Activated CD4-positive, alpha-beta T cell treated with anti-CD3 and anti-CD28 coated beads, Interleukin-2, amount 10 ng/mL, durations not matched to agents 24 days and 14 days (primary cell): ENCODE measurements at regions of chr3 and their contacts with region 1.

Region 1: DNA sequence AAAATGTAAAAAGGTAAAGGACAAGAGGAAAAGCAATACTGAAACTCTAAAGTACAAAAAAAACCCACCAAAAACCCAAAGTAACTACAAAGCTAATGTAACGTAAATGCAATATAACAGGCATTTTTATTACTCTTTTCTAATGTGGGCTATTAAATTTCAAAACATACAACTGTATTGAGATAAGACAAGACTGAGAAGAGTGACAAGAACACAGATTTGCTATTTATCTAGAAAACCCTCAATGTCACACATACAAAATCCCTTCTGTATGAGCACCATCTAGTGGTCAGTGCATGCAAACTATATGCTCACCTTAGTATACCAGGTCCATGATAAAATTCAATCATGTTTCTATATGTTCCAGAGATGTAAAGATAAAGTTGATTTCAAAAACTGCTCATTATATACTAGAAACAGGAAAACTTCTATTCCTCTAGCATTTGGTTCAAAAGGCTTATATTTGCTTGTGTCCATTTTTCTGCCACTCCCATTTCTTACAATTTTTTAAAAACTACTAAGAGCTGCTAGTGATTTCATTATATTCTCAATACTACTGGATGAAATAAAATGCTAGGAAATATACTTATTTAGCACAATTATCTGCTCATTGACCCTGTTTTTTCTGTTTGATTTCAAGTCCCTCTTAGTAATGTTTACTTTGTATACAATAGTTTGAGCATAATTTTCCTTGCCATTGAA is 111.4 kb downstream of the DLG1 start:
- DNase-seq: peak; percentile 74
- H3K4me3 Mint-ChIP-seq: no peak overlapping the region
- H3K27ac Mint-ChIP-seq: no peak overlapping the region
- H3K4me1 Mint-ChIP-seq: peaks cover 8% of the 10 kb centered on the region
- H3K27me3 Mint-ChIP-seq: no peaks in the 10 kb centered on the region

Region 2: GRCh38 chr3:196339493-196340254 is 847.4 kb before region 1 on chr3:
- intact Hi-C with region 1: no loop called
- DNase-seq: no peak
- H3K4me3 Mint-ChIP-seq: no peak overlapping the region
- H3K27ac Mint-ChIP-seq: no peak overlapping the region
- H3K4me1 Mint-ChIP-seq: peaks cover 2% of the 10 kb centered on the region
- H3K27me3 Mint-ChIP-seq: peaks cover 2% of the 10 kb centered on the region

Region 3: GRCh38 chr3:196837819-196838420 is 349.1 kb before region 1 on chr3:
- intact Hi-C with region 1: loop called (anchors 5 kb)
- DNase-seq: peak; percentile 91
- H3K4me3 Mint-ChIP-seq: no peak overlapping the region
- H3K27ac Mint-ChIP-seq: no peak overlapping the region
- H3K4me1 Mint-ChIP-seq: peaks cover 3% of the 10 kb centered on the region
- H3K27me3 Mint-ChIP-seq: no peaks in the 10 kb centered on the region

Region 4: GRCh38 chr3:196942226-196942914 is 244.7 kb before region 1 on chr3 and contains the start of gene NCBP2:
- intact Hi-C with region 1: loop called (anchors 2 kb)
- DNase-seq: peak; percentile 100
- H3K4me3 Mint-ChIP-seq: peak within 1 kb of the TSS; percentile 89
- H3K27ac Mint-ChIP-seq: peak within 1 kb of the TSS; percentile 95
- H3K4me1 Mint-ChIP-seq: peaks cover 41% of the 10 kb centered on the region
- H3K27me3 Mint-ChIP-seq: peaks cover 2% of the 10 kb centered on the region
- total RNA-seq, gene NCBP2: 101 and 105 TPM in 2 replicates

Region 5: DNA sequence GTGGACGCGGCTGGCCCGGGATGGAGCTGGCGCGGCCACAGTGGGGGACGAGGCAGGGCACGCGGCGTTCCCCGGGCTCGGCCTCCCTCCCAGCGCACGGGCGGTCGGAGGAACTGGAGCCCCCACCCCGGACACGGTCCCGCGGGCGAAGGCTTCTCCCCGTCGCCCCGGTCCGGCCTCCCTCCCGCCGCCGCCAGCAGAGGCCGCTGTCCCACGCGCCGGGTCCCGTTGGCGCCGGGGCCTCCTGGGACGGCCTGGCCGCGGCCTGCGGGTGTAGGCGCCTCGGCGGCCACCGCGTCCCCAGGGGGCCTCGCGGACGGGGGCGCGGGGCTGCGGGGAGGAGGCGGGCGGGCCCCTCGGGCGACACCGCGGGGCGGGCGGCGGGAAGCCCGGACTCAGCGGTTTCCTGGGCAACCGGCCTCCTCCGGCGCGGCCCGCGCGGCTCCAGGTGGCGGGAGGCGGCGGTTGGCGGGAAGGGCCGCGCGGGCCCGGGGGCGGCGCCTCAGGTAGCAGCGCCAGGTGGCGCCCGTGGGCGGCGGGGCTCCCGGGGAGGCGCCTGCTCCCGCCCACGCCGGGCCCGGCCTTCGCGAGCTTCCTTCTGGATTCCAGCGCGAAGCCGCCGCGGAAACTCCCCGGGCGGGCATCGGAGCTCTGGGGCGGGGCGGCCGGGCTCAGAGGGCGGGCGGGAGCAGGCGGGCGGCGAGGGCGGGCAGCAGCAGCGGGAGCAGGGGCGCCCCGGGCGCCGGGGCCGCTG is 184.2 kb before region 1 on chr3:
- intact Hi-C with region 1: loop called (anchors 2 kb)
- DNase-seq: peak; percentile 95
- H3K4me3 Mint-ChIP-seq: no peak overlapping the region
- H3K27ac Mint-ChIP-seq: no peak overlapping the region
- H3K4me1 Mint-ChIP-seq: peaks cover 11% of the 10 kb centered on the region
- H3K27me3 Mint-ChIP-seq: peaks cover 2% of the 10 kb centered on the region

Region 6: DNA sequence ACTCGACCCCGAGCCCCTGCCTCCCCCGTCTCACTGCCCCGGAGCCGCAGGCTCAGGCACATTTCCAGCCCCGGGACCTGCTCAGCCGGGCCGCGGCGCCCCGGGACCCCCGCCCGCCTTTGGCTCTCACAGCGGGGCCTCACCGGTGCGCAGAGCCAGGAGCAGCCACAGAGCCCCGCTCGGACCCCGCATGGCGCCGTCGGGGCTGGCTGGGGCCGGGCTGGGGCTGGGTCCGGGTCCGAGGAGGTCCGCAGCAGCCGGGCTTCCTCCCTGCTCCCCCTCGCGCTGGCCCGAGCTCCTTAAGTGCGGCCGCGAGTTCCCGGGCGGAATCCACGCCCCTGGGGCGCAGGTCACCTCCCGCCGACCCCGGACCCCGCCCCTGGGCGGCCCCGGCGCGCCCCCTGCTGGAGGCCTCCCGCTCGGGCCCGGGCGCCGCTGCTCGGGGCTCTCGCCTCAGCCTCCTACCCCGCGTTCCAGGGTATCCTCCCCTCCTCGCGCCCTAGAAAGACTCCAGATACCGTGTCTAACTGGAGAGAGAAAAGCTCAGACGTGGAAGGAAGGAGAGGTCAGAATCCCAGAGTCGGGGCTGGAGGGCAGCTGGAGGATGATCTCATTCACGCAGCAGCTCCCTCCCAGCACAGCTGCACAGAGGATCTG is 157.4 kb before region 1 on chr3 and contains the start of gene MELTF:
- intact Hi-C with region 1: loop called (anchors 10 kb)
- DNase-seq: peak; percentile 95
- H3K4me3 Mint-ChIP-seq: peak within 1 kb of the TSS; percentile 83
- H3K27ac Mint-ChIP-seq: peak within 1 kb of the TSS; percentile 48
- H3K4me1 Mint-ChIP-seq: peaks cover 4% of the 10 kb centered on the region
- H3K27me3 Mint-ChIP-seq: no peaks in the 10 kb centered on the region
- total RNA-seq, gene MELTF: 8.8 and 10.6 TPM in 2 replicates

Region 7: DNA sequence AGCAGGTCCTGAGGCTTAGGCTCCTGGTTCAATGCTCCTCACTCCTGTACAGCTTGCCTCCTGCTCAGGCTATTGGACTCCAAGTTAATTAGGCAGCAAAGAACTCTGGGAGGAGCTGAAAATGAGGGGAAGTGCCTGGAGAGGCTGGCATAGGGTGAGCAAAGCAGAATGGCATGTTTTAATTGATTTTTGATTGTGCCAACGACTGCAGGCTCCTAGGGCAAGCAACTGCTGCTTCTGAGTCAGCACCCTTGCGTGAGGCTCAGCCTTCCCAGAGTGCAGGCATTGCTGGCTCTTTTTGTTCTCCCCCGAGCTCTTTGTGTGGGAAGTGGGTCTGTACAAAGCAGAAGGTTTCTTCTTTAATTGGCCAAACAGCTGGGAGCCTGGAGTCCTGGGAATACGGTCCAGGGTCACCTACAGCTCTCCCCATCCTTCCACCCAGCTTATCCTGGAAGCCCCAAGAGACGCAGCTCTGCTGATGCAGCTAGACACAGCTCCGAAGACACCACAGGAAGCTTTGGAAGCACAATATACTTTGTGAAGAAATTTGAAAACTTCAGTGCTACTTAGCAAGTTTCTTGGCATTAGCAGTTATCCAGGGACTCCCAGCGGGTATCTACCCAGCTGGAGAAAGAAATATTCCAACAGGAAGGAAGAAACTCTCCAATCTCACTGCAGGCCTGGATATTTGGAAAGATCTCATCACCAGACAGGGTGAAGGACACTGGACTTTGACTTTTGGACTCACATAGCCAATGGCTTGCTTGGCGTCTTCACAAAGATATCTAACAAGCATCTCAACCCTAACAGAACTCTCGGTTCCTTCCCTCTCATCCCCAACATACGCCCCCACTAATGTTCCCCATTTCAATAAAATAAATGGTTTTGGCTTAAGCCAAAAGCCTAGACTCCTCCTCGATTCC is 292.0 kb after region 1 on chr3:
- intact Hi-C with region 1: no loop called
- DNase-seq: no peak
- H3K4me3 Mint-ChIP-seq: no peak overlapping the region
- H3K27ac Mint-ChIP-seq: no peak overlapping the region
- H3K4me1 Mint-ChIP-seq: peaks cover 2% of the 10 kb centered on the region
- H3K27me3 Mint-ChIP-seq: peaks cover 11% of the 10 kb centered on the region